Gastrocnemius medialis (tissue), 4 donors: ENCODE measurements at regions of chr2 and their contacts with region 1.

Region 1: DNA sequence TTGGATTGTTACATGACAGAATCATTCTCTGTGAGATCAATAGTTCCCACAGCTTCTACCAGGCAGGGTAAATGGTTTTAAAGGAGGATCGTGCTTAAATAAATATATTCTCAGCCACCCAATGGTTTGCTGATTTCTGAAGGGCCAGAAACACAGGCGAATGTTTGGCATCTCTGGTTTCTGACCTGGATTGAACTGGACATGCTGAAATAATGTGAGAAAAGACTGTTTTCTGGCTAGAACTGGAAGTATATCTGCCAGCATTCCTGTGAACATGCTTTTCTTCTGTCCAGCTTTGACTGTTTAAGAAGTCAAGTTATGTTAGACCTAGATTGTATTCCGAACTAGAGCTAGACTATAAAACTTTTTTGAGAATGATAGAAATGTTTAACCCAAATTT is 77.1 kb upstream of the COL3A1 start:
- DNase-seq: no peak
- ATAC-seq: peak in 1 of 2 donors; percentile 75
- H3K4me3 ChIP-seq: no peak overlapping the region
- H3K27ac ChIP-seq: peak overlapping the region; percentile 30 to 42 (median 40)
- H3K4me1 ChIP-seq: no peaks in the 10 kb centered on the region
- H3K27me3 ChIP-seq: no peaks in the 10 kb centered on the region
- CTCF ChIP-seq: no peak
- POLR2A ChIP-seq: no peak

Region 2: GRCh38 chr2:188878716-188879115 is 18.4 kb before region 1 on chr2:
- in situ Hi-C with region 1: no loop called
- intact Hi-C with region 1: no loop called
- DNase-seq: no peak
- ATAC-seq: no peak
- H3K4me3 ChIP-seq: no peak overlapping the region
- H3K27ac ChIP-seq: no peak overlapping the region
- H3K4me1 ChIP-seq: no peaks in the 10 kb centered on the region
- H3K27me3 ChIP-seq: no peaks in the 10 kb centered on the region
- CTCF ChIP-seq: no peak
- POLR2A ChIP-seq: no peak

Region 3: DNA sequence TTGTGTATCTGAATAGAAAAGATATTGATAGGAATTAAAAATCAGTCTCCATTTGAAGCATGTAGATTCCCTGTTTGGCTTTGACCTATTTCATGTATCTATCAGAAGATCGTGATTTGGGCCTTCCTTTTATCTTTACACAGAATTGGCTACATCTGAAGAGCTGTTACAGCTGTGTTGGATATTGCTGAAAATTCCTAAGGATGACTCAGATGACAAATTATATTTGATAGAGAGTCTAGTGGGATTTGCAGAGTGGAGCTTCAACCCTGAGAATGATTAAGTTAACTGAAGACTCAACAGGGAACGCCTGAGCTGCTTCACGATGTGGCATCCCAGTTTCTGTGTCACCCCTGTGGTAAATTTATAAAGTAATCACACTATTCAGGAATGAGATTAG is 72.1 kb after region 1 on chr2:
- in situ Hi-C with region 1: no loop called
- intact Hi-C with region 1: loop called (anchors 5 kb)
- DNase-seq: no peak
- ATAC-seq: peak in 1 of 2 donors; percentile 27
- H3K4me3 ChIP-seq: no peak overlapping the region
- H3K27ac ChIP-seq: peak overlapping the region; percentile 45 to 58 (median 50)
- H3K4me1 ChIP-seq: peaks cover 6 to 10% of the 10 kb centered on the region in 2 donors
- H3K27me3 ChIP-seq: no peaks in the 10 kb centered on the region
- CTCF ChIP-seq: no peak
- POLR2A ChIP-seq: no peak